A673 (cell line): ENCODE measurements at regions of chr16 and their contacts with region 1.

Region 1: GRCh38 chr16:66872943-66873684 is 7.2 kb upstream of the PDP2 start:
- DNase-seq: peak; percentile 97
- H3K4me3 ChIP-seq: peak overlapping the region; percentile 41
- H3K27ac ChIP-seq: peak overlapping the region; percentile 19
- H3K4me1 ChIP-seq: peaks cover 3% of the 10 kb centered on the region
- H3K27me3 ChIP-seq: no peaks in the 10 kb centered on the region
- CTCF ChIP-seq: peak; percentile 98

Region 2: GRCh38 chr16:66608241-66609138 is 264.6 kb before region 1 on chr16:
- CTCF ChIA-PET with region 1: interaction called, 20 read pairs
- POLR2A ChIA-PET with region 1: no interaction called
- intact Hi-C with region 1: loop called (anchors 5 kb)
- DNase-seq: peak; percentile 83
- H3K4me3 ChIP-seq: no peak overlapping the region
- H3K27ac ChIP-seq: no peak overlapping the region
- H3K4me1 ChIP-seq: peaks cover 18% of the 10 kb centered on the region
- H3K27me3 ChIP-seq: no peaks in the 10 kb centered on the region
- CTCF ChIP-seq: peak; percentile 95

Region 3: DNA sequence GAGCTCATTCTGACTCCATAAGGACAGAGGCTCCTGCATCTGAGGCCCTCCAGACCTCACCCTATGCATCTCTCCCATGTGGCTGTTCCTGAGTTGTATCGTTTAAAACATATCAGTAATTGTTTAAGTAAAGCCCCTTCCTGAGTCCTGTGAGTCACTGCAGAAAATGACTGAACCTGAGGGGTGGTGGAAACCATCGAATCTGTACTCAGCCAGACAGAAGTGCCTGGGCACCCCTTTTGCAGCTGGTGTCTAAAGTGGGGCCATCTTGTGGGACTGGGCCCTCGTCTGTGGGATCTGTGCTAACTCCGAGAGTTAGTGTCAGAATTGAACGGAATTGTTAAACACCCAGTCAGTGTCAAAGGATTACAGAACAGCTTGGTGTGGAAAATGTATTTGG is 243.3 kb before region 1 on chr16:
- CTCF ChIA-PET with region 1: no interaction called
- POLR2A ChIA-PET with region 1: no interaction called
- intact Hi-C with region 1: no loop called
- DNase-seq: no peak
- H3K4me3 ChIP-seq: no peak overlapping the region
- H3K27ac ChIP-seq: no peak overlapping the region
- H3K4me1 ChIP-seq: no peaks in the 10 kb centered on the region
- H3K27me3 ChIP-seq: no peaks in the 10 kb centered on the region
- CTCF ChIP-seq: no peak

Region 4: GRCh38 chr16:66728117-66728787 is 144.9 kb before region 1 on chr16:
- CTCF ChIA-PET with region 1: interaction called, 5 read pairs
- POLR2A ChIA-PET with region 1: no interaction called
- intact Hi-C with region 1: loop called (anchors 5 kb)
- DNase-seq: peak; percentile 76
- H3K4me3 ChIP-seq: no peak overlapping the region
- H3K27ac ChIP-seq: no peak overlapping the region
- H3K4me1 ChIP-seq: no peaks in the 10 kb centered on the region
- H3K27me3 ChIP-seq: no peaks in the 10 kb centered on the region
- CTCF ChIP-seq: peak; percentile 69

Region 5: DNA sequence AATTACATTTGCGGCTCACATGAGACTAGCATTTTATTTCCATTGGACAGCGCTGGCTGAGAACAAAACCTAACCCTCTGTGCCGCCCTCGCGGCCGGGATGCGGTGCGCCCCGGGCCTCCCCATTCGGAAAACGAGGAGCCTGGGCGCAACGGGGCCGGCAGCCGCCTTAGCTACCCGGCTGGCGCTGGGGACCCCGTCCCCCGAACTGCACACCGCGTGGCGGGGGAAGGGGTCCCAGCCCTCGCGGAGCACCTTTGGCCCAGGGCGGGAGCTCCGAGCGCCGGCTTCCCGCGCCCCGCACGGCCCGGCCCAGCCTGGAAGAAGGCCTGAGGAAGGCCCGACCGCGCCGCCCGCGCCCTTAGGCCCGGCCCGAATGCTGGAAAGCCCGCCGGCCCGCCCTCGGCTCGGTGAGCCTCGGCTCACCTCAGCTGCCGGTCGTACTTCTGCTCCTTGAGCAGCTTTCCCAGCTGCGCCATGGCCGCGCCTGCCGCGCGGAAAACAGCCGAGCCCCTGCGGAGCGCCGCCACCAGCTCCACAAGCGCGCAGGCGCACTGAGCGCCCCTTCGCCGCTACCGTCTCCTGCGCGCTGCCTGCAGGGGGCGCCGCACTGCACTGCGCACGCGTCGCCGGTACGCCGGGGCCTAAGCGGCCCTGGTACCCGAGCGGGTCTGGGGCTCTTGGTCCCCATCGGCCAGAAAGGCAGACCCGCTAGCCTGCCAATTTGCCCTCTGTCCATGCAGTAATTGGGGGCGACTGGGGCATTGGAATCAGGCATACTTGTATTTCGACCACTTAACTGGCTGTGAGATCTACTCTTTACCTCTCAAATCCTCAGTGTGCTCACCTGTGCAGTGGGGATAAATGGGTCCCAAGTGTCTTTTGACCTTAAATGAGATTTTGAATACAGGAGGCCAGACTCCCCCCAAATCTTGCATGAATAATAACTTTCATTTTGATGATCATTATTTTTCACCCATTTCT is 42.4 kb before region 1 on chr16 and contains the start of gene NAE1:
- CTCF ChIA-PET with region 1: interaction called, 50 read pairs
- POLR2A ChIA-PET with region 1: interaction called, 4 read pairs
- intact Hi-C with region 1: loop called (anchors 5 kb)
- DNase-seq: peak; percentile 93
- H3K4me3 ChIP-seq: peak within 1 kb of the TSS; percentile 81
- H3K27ac ChIP-seq: peak within 1 kb of the TSS; percentile 95
- H3K4me1 ChIP-seq: peaks cover 8% of the 10 kb centered on the region
- H3K27me3 ChIP-seq: no peaks in the 10 kb centered on the region
- CTCF ChIP-seq: peak; percentile 96
- total RNA-seq, gene NAE1: 172 and 175 TPM in 2 replicates

Region 6: DNA sequence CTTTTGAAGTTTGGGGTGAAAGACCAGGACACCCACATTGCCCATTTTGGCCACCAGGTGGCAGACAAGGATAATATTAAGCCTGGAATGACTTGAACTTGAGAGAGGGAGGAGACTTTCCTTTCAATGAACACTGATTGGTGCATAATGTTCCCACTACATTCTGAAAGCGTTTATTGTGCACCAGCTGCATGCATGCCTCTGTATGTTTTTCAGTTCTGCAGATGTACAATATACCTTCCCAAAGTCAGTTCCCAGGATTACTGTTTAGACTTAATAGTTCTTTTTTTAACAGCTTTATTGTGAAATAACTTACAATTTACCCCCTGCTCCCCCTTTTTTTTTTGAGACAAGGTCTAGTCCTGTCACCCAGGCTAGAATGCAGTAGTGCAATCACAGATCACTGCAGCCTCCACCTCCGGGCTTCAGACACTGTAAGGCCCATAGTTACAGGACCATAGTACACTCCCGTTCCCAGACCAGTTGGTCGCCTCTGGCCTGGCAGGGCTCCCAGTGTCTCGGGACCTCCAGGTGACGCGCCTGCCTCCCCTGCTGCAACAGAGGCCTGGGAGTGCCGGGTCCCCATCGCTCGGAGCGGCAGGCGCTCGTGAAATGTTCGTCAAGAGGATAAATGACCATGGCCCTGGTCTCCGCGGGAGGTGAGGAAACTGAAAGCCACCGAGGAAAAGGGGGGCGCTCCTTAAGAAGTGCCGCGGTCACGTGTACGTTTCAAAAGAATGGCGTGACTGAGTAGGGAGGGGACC is 74.4 kb after region 1 on chr16:
- CTCF ChIA-PET with region 1: interaction called, 11 read pairs
- POLR2A ChIA-PET with region 1: no interaction called
- intact Hi-C with region 1: no loop called
- DNase-seq: peak; percentile 92
- H3K4me3 ChIP-seq: peak overlapping the region; percentile 52
- H3K27ac ChIP-seq: no peak overlapping the region
- H3K4me1 ChIP-seq: no peaks in the 10 kb centered on the region
- H3K27me3 ChIP-seq: no peaks in the 10 kb centered on the region
- CTCF ChIP-seq: peak; percentile 94